GM12878 (cell line): ENCODE measurements at regions of chr22 and their contacts with region 1.

Region 1: GRCh38 chr22:31749636-31750364 is at the start of gene PRR14L:
- DNase-seq: peak; percentile 86
- ATAC-seq: peak; percentile 78
- H3K4me3 ChIP-seq: peak within 1 kb of the TSS; percentile 92
- H3K27ac ChIP-seq: peak within 1 kb of the TSS; percentile 94
- H3K4me1 ChIP-seq: peaks cover 13% of the 10 kb centered on the region
- H3K27me3 ChIP-seq: no peaks in the 10 kb centered on the region
- CTCF ChIP-seq: peak in 1 of 3 experiments; percentile 18; a peak in 2 of 6 replicates
- EP300 ChIP-seq: peak in 1 of 2 experiments; percentile 88; a peak in 2 of 4 replicates
- POLR2A ChIP-seq: peak; percentile 99
- RAD21 ChIP-seq: no peak
- polyA plus RNA-seq, gene PRR14L: 4.2 to 12.3 TPM

Region 2: GRCh38 chr22:31345331-31346254 is 404.2 kb before region 1 on chr22:
- CTCF ChIA-PET with region 1: no interaction called
- POLR2A ChIA-PET with region 1: interaction called, 3 read pairs
- RAD21 ChIA-PET with region 1: no interaction called
- SMC1A ChIA-PET with region 1: no interaction called
- in situ Hi-C with region 1: no loop called
- intact Hi-C with region 1: loop called (anchors 5 kb)
- DNase-seq: peak; percentile 39
- ATAC-seq: peak; percentile 35
- H3K4me3 ChIP-seq: peak overlapping the region; percentile 85
- H3K27ac ChIP-seq: peak overlapping the region; percentile 59
- H3K4me1 ChIP-seq: peaks cover 20% of the 10 kb centered on the region
- H3K27me3 ChIP-seq: no peaks in the 10 kb centered on the region
- CTCF ChIP-seq: peak; percentile 86 to 94 (median 86)
- EP300 ChIP-seq: no peak
- POLR2A ChIP-seq: peak; percentile 75
- RAD21 ChIP-seq: peak; percentile 73

Region 3: GRCh38 chr22:31790240-31790639 is 40.4 kb after region 1 on chr22:
- CTCF ChIA-PET with region 1: no interaction called
- POLR2A ChIA-PET with region 1: interaction called, 4 read pairs
- RAD21 ChIA-PET with region 1: no interaction called
- SMC1A ChIA-PET with region 1: no interaction called
- in situ Hi-C with region 1: no loop called
- intact Hi-C with region 1: loop called (anchors 2 kb)
- DNase-seq: no peak
- ATAC-seq: peak; percentile 97
- H3K4me3 ChIP-seq: no peak overlapping the region
- H3K27ac ChIP-seq: peak overlapping the region; percentile 68
- H3K4me1 ChIP-seq: peaks cover 30% of the 10 kb centered on the region
- H3K27me3 ChIP-seq: no peaks in the 10 kb centered on the region
- CTCF ChIP-seq: no peak
- EP300 ChIP-seq: peak in 1 of 2 experiments; percentile 72; a peak in 2 of 4 replicates
- POLR2A ChIP-seq: no peak
- RAD21 ChIP-seq: no peak

Region 4: GRCh38 chr22:31802575-31802974 is 52.8 kb after region 1 on chr22:
- CTCF ChIA-PET with region 1: no interaction called
- POLR2A ChIA-PET with region 1: no interaction called
- RAD21 ChIA-PET with region 1: no interaction called
- SMC1A ChIA-PET with region 1: no interaction called
- in situ Hi-C with region 1: no loop called
- intact Hi-C with region 1: no loop called
- DNase-seq: no peak
- ATAC-seq: no peak
- H3K4me3 ChIP-seq: no peak overlapping the region
- H3K27ac ChIP-seq: no peak overlapping the region
- H3K4me1 ChIP-seq: no peaks in the 10 kb centered on the region
- H3K27me3 ChIP-seq: no peaks in the 10 kb centered on the region
- CTCF ChIP-seq: no peak
- EP300 ChIP-seq: no peak
- POLR2A ChIP-seq: no peak
- RAD21 ChIP-seq: no peak